IMR-90 (cell line): ENCODE measurements at regions of chr1 and their contacts with region 1.

Region 1: DNA sequence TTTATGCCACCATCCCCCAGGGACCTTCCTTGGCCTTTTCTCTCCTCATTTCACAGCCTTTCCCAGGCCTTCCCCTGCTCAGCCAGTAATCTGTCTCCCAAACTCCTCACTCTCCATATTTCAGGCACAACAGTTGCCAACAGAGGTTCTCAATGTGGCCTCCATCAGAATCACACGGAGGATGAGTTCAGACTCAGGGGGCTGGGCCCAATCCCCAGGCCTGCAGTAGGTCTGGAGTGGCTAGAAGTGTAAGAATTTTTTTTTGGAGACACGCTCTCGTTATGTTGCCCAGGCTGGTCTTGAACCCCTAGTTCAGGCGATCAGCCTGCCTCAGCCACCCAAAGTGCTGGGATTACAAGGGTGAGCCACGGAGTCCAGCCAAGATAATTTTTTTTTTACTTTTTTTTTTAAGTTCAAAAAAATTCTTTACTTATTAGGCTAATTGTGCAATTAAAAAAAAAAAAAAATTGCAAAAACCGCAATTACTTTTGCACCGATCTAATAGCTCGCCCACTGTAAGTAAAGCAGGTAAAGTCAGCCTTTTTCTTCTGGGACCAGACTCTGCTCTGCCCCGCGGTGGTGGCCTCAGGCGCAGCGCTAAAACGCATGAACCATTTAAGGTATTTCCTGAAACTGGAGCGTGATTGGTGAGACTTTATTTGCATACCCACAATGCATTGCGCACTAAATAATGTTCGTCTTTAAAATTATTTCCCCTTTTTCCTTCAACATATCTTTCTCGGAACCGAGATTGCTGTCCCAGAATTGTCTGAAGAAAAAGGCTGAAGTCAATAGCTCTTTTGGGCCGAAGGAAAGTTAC is 18.7 kb downstream of the KIAA2013 start:
- DNase-seq: peak; percentile 95
- ATAC-seq: peak; percentile 71
- H3K4me3 ChIP-seq: peak overlapping the region; percentile 26; the same call in 1 of the 2 replicates
- H3K27ac ChIP-seq: peak overlapping the region; percentile 70
- H3K4me1 ChIP-seq: no peaks in the 10 kb centered on the region
- H3K27me3 ChIP-seq: no peaks in the 10 kb centered on the region
- CTCF ChIP-seq: peak; percentile 77
- POLR2A ChIP-seq: no peak
- RAD21 ChIP-seq: peak; percentile 61

Region 2: DNA sequence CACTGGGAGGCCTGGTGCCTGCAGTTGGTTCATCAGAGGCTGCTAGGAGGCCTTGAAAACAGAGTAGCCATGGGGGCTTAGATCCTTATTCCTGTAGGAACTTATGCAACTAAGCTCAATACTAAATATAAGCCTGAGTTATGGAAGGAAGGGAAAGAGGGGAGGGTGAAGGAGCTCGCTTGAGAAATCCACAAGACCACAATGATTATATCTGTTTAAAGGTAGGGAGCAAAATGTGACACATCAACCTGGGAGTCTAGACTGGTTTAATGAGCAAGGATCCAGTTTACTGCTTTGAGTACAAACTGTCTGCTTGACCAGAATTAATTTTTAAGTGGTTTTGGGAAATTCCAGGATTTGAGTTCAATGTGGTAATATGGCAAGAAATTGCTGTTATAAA is 738.8 kb before region 1 on chr1:
- CTCF ChIA-PET with region 1: no interaction called
- POLR2A ChIA-PET with region 1: no interaction called
- dilution Hi-C with region 1: no loop called
- in situ Hi-C with region 1: no loop called
- intact Hi-C with region 1: no loop called
- DNase-seq: no peak
- ATAC-seq: no peak
- H3K4me3 ChIP-seq: no peak overlapping the region
- H3K27ac ChIP-seq: no peak overlapping the region
- H3K4me1 ChIP-seq: no peaks in the 10 kb centered on the region
- H3K27me3 ChIP-seq: no peaks in the 10 kb centered on the region
- CTCF ChIP-seq: no peak
- POLR2A ChIP-seq: no peak
- RAD21 ChIP-seq: no peak

Region 3: DNA sequence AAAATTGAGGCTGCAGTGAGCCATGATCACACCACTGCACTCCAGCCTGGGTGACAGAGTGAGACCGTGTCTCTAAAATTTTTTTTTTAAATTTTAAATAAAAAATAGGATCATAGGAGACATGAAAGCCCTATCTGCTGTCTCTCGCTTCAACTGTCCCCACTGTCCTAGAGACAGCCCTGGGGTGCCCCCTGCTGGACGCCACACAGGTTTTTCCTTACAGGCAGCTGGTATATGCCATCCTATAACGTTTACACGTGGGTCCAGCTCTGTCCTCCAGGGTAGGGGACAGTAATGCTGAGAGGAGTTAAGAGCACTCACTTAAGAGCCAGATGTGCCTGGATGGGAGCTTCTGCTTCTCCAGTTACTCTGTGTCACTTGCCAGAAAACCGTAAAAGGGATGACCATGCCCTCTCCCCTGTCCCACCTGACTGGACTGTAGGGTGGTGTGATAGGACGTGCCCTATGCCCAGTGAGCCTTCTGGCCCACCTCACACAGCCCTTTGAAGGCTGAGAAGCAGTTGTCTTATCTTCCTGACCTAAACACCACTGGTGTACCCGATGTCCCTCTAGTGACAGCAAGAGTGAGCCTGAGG is 261.7 kb before region 1 on chr1:
- CTCF ChIA-PET with region 1: no interaction called
- POLR2A ChIA-PET with region 1: no interaction called
- dilution Hi-C with region 1: no loop called
- in situ Hi-C with region 1: no loop called
- intact Hi-C with region 1: loop called (anchors 10 kb)
- DNase-seq: peak; percentile 60
- ATAC-seq: peak; percentile 74
- H3K4me3 ChIP-seq: no peak overlapping the region
- H3K27ac ChIP-seq: no peak overlapping the region
- H3K4me1 ChIP-seq: no peaks in the 10 kb centered on the region; the same call in 1 of the 2 replicates
- H3K27me3 ChIP-seq: peaks cover 19% of the 10 kb centered on the region
- CTCF ChIP-seq: peak; percentile 74
- POLR2A ChIP-seq: no peak
- RAD21 ChIP-seq: peak; percentile 73

Region 4: GRCh38 chr1:11761988-11762406 is 145.5 kb before region 1 on chr1 and contains the start of gene C1orf167:
- CTCF ChIA-PET with region 1: no interaction called
- POLR2A ChIA-PET with region 1: no interaction called
- dilution Hi-C with region 1: no loop called
- in situ Hi-C with region 1: no loop called
- intact Hi-C with region 1: no loop called
- DNase-seq: no peak
- ATAC-seq: peak; percentile 46; the same call in 1 of the 2 replicates
- H3K4me3 ChIP-seq: no peak within 1 kb of the TSS
- H3K27ac ChIP-seq: no peak within 1 kb of the TSS
- H3K4me1 ChIP-seq: peaks cover 1% of the 10 kb centered on the region; the same call in 1 of the 2 replicates
- H3K27me3 ChIP-seq: peaks cover 36% of the 10 kb centered on the region
- CTCF ChIP-seq: no peak
- POLR2A ChIP-seq: no peak
- RAD21 ChIP-seq: no peak
- total RNA-seq, gene C1orf167: under 0.01 and 0.28 TPM in 2 replicates

Region 5: GRCh38 chr1:11838349-11839272 is 68.9 kb before region 1 on chr1:
- CTCF ChIA-PET with region 1: interaction called, 3 read pairs
- POLR2A ChIA-PET with region 1: interaction called, 3 read pairs
- dilution Hi-C with region 1: no loop called
- in situ Hi-C with region 1: no loop called
- intact Hi-C with region 1: loop called (anchors 1 kb)
- DNase-seq: peak; percentile 41
- ATAC-seq: peak; percentile 93
- H3K4me3 ChIP-seq: no peak overlapping the region
- H3K27ac ChIP-seq: no peak overlapping the region
- H3K4me1 ChIP-seq: peaks cover 2% of the 10 kb centered on the region; the same call in 1 of the 2 replicates
- H3K27me3 ChIP-seq: no peaks in the 10 kb centered on the region
- CTCF ChIP-seq: peak; percentile 96
- POLR2A ChIP-seq: 0 out of 2 replicates have a peak, but pooled peaks have one; percentile 35
- RAD21 ChIP-seq: peak; percentile 93

Region 6: GRCh38 chr1:11918779-11919519 is 11.5 kb after region 1 on chr1:
- CTCF ChIA-PET with region 1: interaction called, 3 read pairs
- POLR2A ChIA-PET with region 1: interaction called, 11 read pairs
- dilution Hi-C with region 1: no loop called
- in situ Hi-C with region 1: no loop called
- intact Hi-C with region 1: no loop called
- DNase-seq: peak; percentile 88
- ATAC-seq: peak; percentile 94
- H3K4me3 ChIP-seq: no peak overlapping the region
- H3K27ac ChIP-seq: no peak overlapping the region
- H3K4me1 ChIP-seq: peaks cover 8% of the 10 kb centered on the region
- H3K27me3 ChIP-seq: no peaks in the 10 kb centered on the region
- CTCF ChIP-seq: no peak
- POLR2A ChIP-seq: no peak
- RAD21 ChIP-seq: no peak; the same call in 1 of the 2 replicates

Region 7: GRCh38 chr1:11952455-11953109 is 45.1 kb after region 1 on chr1:
- CTCF ChIA-PET with region 1: no interaction called
- POLR2A ChIA-PET with region 1: interaction called, 14 read pairs
- dilution Hi-C with region 1: no loop called
- in situ Hi-C with region 1: no loop called
- intact Hi-C with region 1: no loop called
- DNase-seq: no peak
- ATAC-seq: no peak
- H3K4me3 ChIP-seq: no peak overlapping the region
- H3K27ac ChIP-seq: no peak overlapping the region
- H3K4me1 ChIP-seq: no peaks in the 10 kb centered on the region
- H3K27me3 ChIP-seq: no peaks in the 10 kb centered on the region
- CTCF ChIP-seq: no peak
- POLR2A ChIP-seq: no peak
- RAD21 ChIP-seq: no peak

Region 8: DNA sequence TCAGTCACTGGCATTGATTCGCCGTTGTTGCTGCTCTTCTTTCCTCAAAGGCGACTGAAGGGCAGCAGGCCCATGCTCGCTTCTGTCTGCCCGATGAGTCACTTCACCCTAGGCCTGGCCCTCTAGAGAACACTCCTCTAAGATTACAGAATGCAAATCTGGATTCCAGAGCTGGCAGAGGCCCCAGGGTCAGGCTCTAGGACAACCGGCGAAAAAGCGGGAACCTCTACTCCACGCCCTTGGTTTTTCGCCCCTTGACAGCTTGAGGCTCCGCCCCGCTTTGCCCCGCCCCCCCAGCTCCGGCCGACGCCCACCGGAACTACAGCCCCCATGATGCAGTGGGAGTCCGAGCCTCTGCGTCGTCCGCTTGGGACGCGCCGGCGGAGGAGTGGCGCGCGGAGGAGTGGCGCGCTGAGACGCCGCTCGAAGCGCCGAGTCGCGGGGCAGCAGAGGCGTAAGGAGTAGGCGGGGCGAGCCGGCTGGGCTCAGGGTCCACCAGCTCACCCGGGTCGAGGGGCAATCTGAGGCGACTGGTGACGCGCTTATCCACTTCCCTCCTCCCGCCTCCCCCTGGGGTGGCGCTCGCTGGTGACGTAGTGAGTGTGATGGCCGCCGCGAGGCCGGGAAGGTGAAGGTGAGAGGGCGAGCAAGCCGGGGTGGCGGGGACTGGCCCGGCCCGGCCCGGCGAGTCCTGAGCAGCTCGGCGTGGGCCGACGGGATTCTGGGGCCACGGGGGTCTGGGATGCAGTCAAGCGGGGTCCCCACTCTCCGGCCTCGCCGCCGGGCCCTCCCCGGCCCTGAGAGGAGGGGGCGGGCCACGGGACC is 72.6 kb after region 1 on chr1 and contains the start of gene MFN2:
- CTCF ChIA-PET with region 1: interaction called, 3 read pairs
- POLR2A ChIA-PET with region 1: interaction called, 9 read pairs
- dilution Hi-C with region 1: no loop called
- in situ Hi-C with region 1: no loop called
- intact Hi-C with region 1: loop called (anchors 1 kb)
- DNase-seq: peak; percentile 97
- ATAC-seq: peak; percentile 95
- H3K4me3 ChIP-seq: peak within 1 kb of the TSS; percentile 72
- H3K27ac ChIP-seq: peak within 1 kb of the TSS; percentile 60
- H3K4me1 ChIP-seq: peaks cover 5% of the 10 kb centered on the region
- H3K27me3 ChIP-seq: no peaks in the 10 kb centered on the region
- CTCF ChIP-seq: 0 out of 2 replicates have a peak, but pooled peaks have one; percentile 1
- POLR2A ChIP-seq: peak; percentile 66
- RAD21 ChIP-seq: no peak
- total RNA-seq, gene MFN2: 76.4 and 84.2 TPM in 2 replicates

Region 9: DNA sequence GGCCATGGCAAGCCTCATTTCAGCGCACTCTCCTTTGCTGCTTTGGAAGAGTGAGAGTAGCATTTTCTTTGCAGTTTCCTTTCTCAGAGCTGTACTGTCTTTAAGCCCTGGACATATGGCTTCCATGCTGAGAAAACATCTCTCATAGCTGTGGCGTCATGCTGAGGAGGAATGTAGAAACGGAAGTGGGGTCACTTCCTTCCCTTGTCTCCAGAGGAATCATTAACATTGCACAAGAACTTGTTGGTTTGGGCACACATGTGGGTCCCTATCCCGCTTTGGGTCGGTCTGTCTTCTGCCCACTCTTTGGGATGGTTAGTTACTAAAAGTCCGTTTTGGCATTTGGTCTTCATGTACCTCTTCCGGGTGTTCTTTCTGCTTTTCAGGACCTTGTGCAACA is 78.4 kb after region 1 on chr1:
- CTCF ChIA-PET with region 1: no interaction called
- POLR2A ChIA-PET with region 1: interaction called, 14 read pairs
- dilution Hi-C with region 1: no loop called
- in situ Hi-C with region 1: no loop called
- intact Hi-C with region 1: no loop called
- DNase-seq: peak; percentile 28
- ATAC-seq: no peak
- H3K4me3 ChIP-seq: no peak overlapping the region
- H3K27ac ChIP-seq: no peak overlapping the region
- H3K4me1 ChIP-seq: 0 out of 2 replicates have a peak, but pooled peaks cover 2% of the 10 kb centered on the region
- H3K27me3 ChIP-seq: no peaks in the 10 kb centered on the region
- CTCF ChIP-seq: no peak
- POLR2A ChIP-seq: no peak
- RAD21 ChIP-seq: no peak